Activated B cell treated with CpG ODN at 0.5 μM for 24 hours (primary cell): ENCODE measurements at regions of chr1 and their contacts with region 1.

Region 1: DNA sequence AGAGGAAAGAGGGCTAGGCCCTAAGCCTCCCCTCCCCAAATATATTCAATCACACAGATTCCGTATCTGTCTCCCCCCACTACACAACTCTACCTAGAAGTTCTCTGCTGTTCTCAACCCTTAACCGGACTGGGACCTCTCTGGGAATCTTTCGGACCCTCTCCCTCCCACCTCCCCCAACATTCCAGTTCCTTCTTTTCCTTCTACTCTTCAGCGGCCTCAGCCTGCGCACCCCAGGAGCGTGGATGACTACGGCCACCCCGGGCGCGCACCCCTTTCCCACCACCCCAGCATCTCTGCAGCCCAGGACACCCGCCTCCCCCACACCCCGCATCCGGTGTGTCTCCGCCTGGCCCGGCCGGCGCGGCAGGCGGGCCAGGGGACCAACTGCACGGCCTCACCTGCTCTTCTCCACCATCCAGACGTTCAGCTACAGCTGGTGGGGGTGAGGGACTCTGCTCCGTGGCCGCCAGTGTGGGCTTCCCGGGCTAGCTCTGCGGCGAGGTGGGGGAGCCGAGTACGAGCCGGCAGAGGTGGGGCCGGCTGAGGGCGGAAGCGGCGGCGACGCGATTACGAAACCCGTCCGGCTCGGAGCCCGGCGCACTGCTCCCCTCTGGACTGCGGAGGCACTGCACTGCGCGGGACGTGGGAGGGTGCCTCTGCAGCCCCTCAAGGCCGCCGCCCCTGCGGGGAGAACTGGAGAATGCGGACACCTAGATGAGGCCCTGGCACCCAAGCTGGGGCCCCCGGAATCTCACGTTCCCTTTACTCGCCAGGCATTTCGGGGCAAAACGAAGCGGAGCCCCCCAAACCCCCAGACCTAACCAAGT is at the start of gene CDC42SE1:
- DNase-seq: peak; percentile 82
- ATAC-seq: peak; percentile 88
- H3K4me3 Mint-ChIP-seq: peak within 1 kb of the TSS; percentile 98
- H3K27ac Mint-ChIP-seq: peak within 1 kb of the TSS; percentile 93
- H3K4me1 Mint-ChIP-seq: peaks cover 54% of the 10 kb centered on the region
- H3K27me3 Mint-ChIP-seq: no peaks in the 10 kb centered on the region
- CTCF ChIP-seq: no peak
- total RNA-seq, gene CDC42SE1: 139 and 148 TPM in 2 replicates

Region 2: DNA sequence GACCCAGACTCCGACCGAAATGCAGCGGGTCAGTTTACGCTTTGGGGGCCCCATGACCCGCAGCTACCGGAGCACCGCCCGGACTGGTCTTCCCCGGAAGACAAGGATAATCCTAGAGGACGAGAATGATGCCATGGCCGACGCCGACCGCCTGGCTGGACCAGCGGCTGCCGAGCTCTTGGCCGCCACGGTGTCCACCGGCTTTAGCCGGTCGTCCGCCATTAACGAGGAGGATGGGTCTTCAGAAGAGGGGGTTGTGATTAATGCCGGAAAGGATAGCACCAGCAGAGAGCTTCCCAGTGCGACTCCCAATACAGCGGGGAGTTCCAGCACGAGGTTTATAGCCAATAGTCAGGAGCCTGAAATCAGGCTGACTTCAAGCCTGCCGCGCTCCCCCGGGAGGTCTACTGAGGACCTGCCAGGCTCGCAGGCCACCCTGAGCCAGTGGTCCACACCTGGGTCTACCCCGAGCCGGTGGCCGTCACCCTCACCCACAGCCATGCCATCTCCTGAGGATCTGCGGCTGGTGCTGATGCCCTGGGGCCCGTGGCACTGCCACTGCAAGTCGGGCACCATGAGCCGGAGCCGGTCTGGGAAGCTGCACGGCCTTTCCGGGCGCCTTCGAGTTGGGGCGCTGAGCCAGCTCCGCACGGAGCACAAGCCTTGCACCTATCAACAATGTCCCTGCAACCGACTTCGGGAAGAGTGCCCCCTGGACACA is 11.2 kb before region 1 on chr1:
- CTCF ChIA-PET with region 1: interaction called, 10 read pairs
- POLR2A ChIA-PET with region 1: interaction called, 63 read pairs
- intact Hi-C with region 1: loop called (anchors 1 kb)
- DNase-seq: peak; percentile 58
- ATAC-seq: peak; percentile 74
- H3K4me3 Mint-ChIP-seq: peak overlapping the region; percentile 94
- H3K27ac Mint-ChIP-seq: peak overlapping the region; percentile 89
- H3K4me1 Mint-ChIP-seq: peaks cover 42% of the 10 kb centered on the region
- H3K27me3 Mint-ChIP-seq: no peaks in the 10 kb centered on the region
- CTCF ChIP-seq: no peak